ENCODE measurements at regions of chr18 and their contacts with region 1.

Region 1: GRCh38 chr18:59127047-59127446 is 12.6 kb upstream of the SEC11C start:
- DNase-seq: no peak
- CTCF ChIP-seq: no peak

Region 2: GRCh38 chr18:59085797-59086196 is 41.2 kb before region 1 on chr18:
- CTCF ChIA-PET with region 1: interaction called, 11 read pairs
- POLR2A ChIA-PET with region 1: no interaction called
- DNase-seq: no peak
- CTCF ChIP-seq: no peak

Region 3: GRCh38 chr18:59387687-59388565 is 260.9 kb after region 1 on chr18:
- CTCF ChIA-PET with region 1: no interaction called
- POLR2A ChIA-PET with region 1: no interaction called
- DNase-seq: no peak
- CTCF ChIP-seq: no peak